ENCODE measurements at regions of chr14 and their contacts with region 1.

Region 1: DNA sequence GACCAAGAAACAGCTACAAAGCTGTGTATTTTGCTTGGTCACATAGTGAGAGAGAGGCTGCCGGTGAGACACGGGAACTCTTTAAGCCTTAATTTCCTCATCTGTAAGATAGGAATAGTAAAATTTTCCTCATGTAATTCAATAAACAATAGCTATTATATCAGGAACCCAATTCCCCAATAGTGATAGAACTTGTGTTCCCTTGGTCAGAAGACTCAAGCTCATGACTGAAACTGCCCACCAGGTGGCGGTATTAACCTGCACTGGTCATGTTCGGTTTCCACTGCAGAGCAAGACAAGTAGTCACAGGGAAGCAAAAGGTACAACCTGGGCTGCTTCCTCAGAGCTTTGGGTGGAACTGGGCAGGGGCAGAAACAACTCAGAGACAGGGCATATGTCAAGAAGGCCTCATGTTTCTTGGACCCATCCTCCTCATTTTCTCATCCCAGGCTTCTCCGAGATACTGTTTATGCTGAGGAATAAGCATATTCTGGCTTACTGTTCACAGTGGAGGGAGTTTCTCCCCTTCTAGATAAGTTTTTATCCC is 4.2 kb upstream of the AJUBA start:
- DNase-seq: peak; percentile 70
- H3K4me3 ChIP-seq: no peak overlapping the region
- H3K27ac ChIP-seq: no peak overlapping the region
- H3K4me1 ChIP-seq: no peaks in the 10 kb centered on the region
- H3K27me3 ChIP-seq: no peaks in the 10 kb centered on the region
- CTCF ChIP-seq: peak; percentile 92 to 93

Region 2: GRCh38 chr14:22872033-22872832 is 114.3 kb before region 1 on chr14:
- CTCF ChIA-PET with region 1: no interaction called
- dilution Hi-C with region 1: no loop called
- in situ Hi-C with region 1: no loop called
- intact Hi-C with region 1: loop called (anchors 2 kb)
- DNase-seq: peak; percentile 85
- H3K4me3 ChIP-seq: peak overlapping the region; percentile 85 to 90 (median 87)
- H3K27ac ChIP-seq: peak overlapping the region; percentile 85
- H3K4me1 ChIP-seq: peaks cover 12% of the 10 kb centered on the region
- H3K27me3 ChIP-seq: no peaks in the 10 kb centered on the region
- CTCF ChIP-seq: peak; percentile 98

Region 3: DNA sequence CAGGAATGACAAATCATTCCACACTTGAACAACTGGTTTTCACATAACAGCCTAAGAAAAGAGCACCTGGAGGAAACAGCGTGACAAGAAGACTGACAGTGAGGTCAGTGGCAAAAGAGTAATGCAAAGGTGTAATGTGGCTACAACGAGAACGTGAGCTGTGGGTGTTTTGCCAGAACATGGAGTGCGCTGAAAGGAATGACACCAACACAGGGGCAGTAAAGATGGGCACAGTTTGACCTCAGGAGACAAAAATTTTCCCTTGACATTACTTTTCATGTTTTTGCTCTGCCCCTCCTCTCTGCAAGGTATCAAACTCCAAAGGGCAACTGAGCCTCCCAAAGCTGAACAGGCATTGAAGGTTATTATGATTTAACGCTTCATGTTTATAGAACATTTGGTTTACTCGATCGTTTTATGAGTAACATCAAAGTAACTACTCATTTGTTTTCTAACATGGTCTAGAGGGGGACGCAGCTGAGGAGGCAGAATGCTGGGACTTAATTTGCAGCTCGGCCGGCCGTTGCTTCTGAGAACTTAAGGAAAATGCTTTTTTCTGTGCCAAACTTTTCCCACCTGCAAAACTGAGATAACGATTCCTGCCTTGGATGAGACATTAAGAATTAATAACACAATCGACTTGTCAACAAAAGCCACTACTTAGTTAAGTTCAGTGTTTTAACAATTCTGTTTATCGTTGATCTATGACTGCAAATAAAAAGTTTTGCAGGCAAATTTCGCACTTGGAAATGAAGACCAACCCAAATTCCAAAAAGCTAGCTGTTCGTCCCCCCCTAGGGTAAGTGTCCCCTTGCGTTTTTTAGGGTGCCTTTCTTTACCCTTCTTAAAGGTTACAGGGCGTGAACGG is 30.6 kb before region 1 on chr14:
- CTCF ChIA-PET with region 1: interaction called, 4 read pairs
- dilution Hi-C with region 1: no loop called
- in situ Hi-C with region 1: no loop called
- intact Hi-C with region 1: loop called (anchors 2 kb)
- DNase-seq: peak; percentile 55
- H3K4me3 ChIP-seq: peak overlapping the region; percentile 68 to 76 (median 68)
- H3K27ac ChIP-seq: peak overlapping the region; percentile 79
- H3K4me1 ChIP-seq: peaks cover 11% of the 10 kb centered on the region
- H3K27me3 ChIP-seq: no peaks in the 10 kb centered on the region
- CTCF ChIP-seq: no peak

Region 4: GRCh38 chr14:23020143-23021128 is 33.9 kb after region 1 on chr14:
- CTCF ChIA-PET with region 1: no interaction called
- dilution Hi-C with region 1: no loop called
- in situ Hi-C with region 1: no loop called
- intact Hi-C with region 1: no loop called
- DNase-seq: no peak
- H3K4me3 ChIP-seq: no peak overlapping the region
- H3K27ac ChIP-seq: no peak overlapping the region
- H3K4me1 ChIP-seq: no peaks in the 10 kb centered on the region
- H3K27me3 ChIP-seq: no peaks in the 10 kb centered on the region
- CTCF ChIP-seq: no peak

Region 5: GRCh38 chr14:23047034-23047634 is 60.6 kb after region 1 on chr14:
- CTCF ChIA-PET with region 1: interaction called, 10 read pairs
- dilution Hi-C with region 1: loop called (anchors 10 kb)
- in situ Hi-C with region 1: loop called (anchors 5 kb)
- intact Hi-C with region 1: loop called (anchors 1 kb)
- DNase-seq: no peak
- H3K4me3 ChIP-seq: no peak overlapping the region
- H3K27ac ChIP-seq: no peak overlapping the region
- H3K4me1 ChIP-seq: no peaks in the 10 kb centered on the region
- H3K27me3 ChIP-seq: no peaks in the 10 kb centered on the region
- CTCF ChIP-seq: no peak

Region 6: GRCh38 chr14:23068476-23069412 is 82.2 kb after region 1 on chr14:
- CTCF ChIA-PET with region 1: interaction called, 15 read pairs
- dilution Hi-C with region 1: no loop called
- in situ Hi-C with region 1: no loop called
- intact Hi-C with region 1: no loop called
- DNase-seq: peak; percentile 83
- H3K4me3 ChIP-seq: no peak overlapping the region
- H3K27ac ChIP-seq: no peak overlapping the region
- H3K4me1 ChIP-seq: peaks cover 10% of the 10 kb centered on the region
- H3K27me3 ChIP-seq: no peaks in the 10 kb centered on the region
- CTCF ChIP-seq: peak; percentile 100

Measured in mammary epithelial cell (primary cell).